CD4-positive, alpha-beta T cell (primary cell): ENCODE measurements at regions of chr9 and their contacts with region 1.

Region 1: GRCh38 chr9:100352727-100353505 is at the start of gene TEX10:
- DNase-seq: peak; percentile 79 to 93 (median 85)
- ATAC-seq: peak; percentile 90
- H3K4me3 ChIP-seq: peak within 1 kb of the TSS; percentile 85
- H3K4me3 Mint-ChIP-seq: peak within 1 kb of the TSS; percentile 89
- H3K27ac ChIP-seq: peak within 1 kb of the TSS; percentile 58 to 60
- H3K27ac Mint-ChIP-seq: peak within 1 kb of the TSS; percentile 60
- H3K4me1 ChIP-seq: peaks cover 21% of the 10 kb centered on the region
- H3K4me1 Mint-ChIP-seq: peaks cover 53% of the 10 kb centered on the region
- H3K27me3 ChIP-seq: no peaks in the 10 kb centered on the region
- H3K27me3 Mint-ChIP-seq: no peaks in the 10 kb centered on the region
- CTCF ChIP-seq: no peak
- total RNA-seq, gene TEX10: 9.3 to 10.1 TPM

Region 2: GRCh38 chr9:99221621-99222415 is 1131.1 kb before region 1 on chr9 and contains the starts of genes ALG2 and SEC61B:
- CTCF ChIA-PET with region 1: no interaction called
- POLR2A ChIA-PET with region 1: interaction called, 4 read pairs
- intact Hi-C with region 1: loop called in 1 of 2 experiments (anchors 5 kb)
- DNase-seq: peak; percentile 87 to 96 (median 90)
- ATAC-seq: peak; percentile 84
- H3K4me3 ChIP-seq: peak within 1 kb of the TSS; percentile 91
- H3K4me3 Mint-ChIP-seq: peak within 1 kb of the TSS; percentile 98
- H3K27ac ChIP-seq: peak within 1 kb of the TSS; percentile 89 to 95
- H3K27ac Mint-ChIP-seq: peak within 1 kb of the TSS; percentile 99
- H3K4me1 ChIP-seq: peaks cover 33% of the 10 kb centered on the region
- H3K4me1 Mint-ChIP-seq: peaks cover 81% of the 10 kb centered on the region
- H3K27me3 ChIP-seq: no peaks in the 10 kb centered on the region
- H3K27me3 Mint-ChIP-seq: no peaks in the 10 kb centered on the region
- CTCF ChIP-seq: no peak
- total RNA-seq, gene ALG2: 18.1 to 19.9 TPM
- total RNA-seq, gene SEC61B: 83.4 to 84.2 TPM

Region 3: GRCh38 chr9:100229561-100229960 is 123.4 kb before region 1 on chr9:
- CTCF ChIA-PET with region 1: no interaction called
- POLR2A ChIA-PET with region 1: no interaction called
- intact Hi-C with region 1: no loop called
- DNase-seq: no peak
- ATAC-seq: no peak
- H3K4me3 ChIP-seq: no peak overlapping the region
- H3K4me3 Mint-ChIP-seq: no peak overlapping the region
- H3K27ac ChIP-seq: no peak overlapping the region
- H3K27ac Mint-ChIP-seq: no peak overlapping the region
- H3K4me1 ChIP-seq: no peaks in the 10 kb centered on the region
- H3K4me1 Mint-ChIP-seq: no peaks in the 10 kb centered on the region
- H3K27me3 ChIP-seq: no peaks in the 10 kb centered on the region
- H3K27me3 Mint-ChIP-seq: no peaks in the 10 kb centered on the region
- CTCF ChIP-seq: no peak

Region 4: GRCh38 chr9:100340224-100340623 is 12.7 kb before region 1 on chr9:
- CTCF ChIA-PET with region 1: interaction called, 4 read pairs
- POLR2A ChIA-PET with region 1: interaction called, 17 read pairs
- intact Hi-C with region 1: no loop called
- DNase-seq: no peak
- ATAC-seq: no peak
- H3K4me3 ChIP-seq: no peak overlapping the region
- H3K4me3 Mint-ChIP-seq: no peak overlapping the region
- H3K27ac ChIP-seq: no peak overlapping the region
- H3K27ac Mint-ChIP-seq: no peak overlapping the region
- H3K4me1 ChIP-seq: no peaks in the 10 kb centered on the region
- H3K4me1 Mint-ChIP-seq: peaks cover 50% of the 10 kb centered on the region
- H3K27me3 ChIP-seq: no peaks in the 10 kb centered on the region
- H3K27me3 Mint-ChIP-seq: no peaks in the 10 kb centered on the region
- CTCF ChIP-seq: no peak

Region 5: DNA sequence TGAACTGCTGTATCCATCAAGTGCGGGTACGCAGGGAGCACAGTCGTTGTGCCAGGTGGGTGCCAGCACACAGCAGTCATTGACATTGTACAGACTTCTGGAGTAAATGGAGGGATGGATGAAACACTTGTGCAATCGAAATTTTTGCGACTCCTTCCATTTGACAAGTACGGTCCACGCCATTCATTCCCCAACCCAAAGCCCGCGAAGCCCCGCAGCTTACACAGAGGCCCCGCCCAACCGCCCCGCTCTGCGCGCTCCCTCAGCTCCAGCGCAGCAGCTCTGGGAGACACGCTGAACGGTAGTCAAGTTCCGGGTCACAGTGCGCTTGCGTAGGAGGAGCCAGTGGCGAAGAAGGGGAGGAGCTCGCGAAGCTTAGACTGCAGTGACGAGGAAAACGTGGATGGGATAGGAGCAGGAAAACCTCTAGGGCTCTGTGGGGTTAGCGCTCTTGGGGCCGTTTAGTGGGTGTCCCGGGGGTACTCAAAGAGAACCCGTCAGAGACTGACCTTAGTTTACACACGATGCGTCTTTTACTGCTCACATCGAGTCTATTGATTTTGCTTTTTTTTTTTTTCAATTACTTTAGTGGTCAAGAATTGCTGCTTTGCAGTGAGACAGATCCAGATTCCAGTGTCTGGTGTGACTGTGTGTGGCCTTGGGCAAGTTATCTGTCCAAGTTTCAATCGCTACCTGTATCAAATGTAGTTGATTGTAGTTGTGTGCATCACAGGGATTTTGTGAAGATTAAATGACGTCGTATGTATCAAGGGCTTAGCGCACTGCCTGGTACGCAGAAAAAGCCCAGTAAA is 58.8 kb after region 1 on chr9:
- CTCF ChIA-PET with region 1: no interaction called
- POLR2A ChIA-PET with region 1: interaction called, 15 read pairs
- intact Hi-C with region 1: loop called in 1 of 2 experiments (anchors 2 kb)
- DNase-seq: peak; percentile 66 to 94 (median 82)
- ATAC-seq: peak; percentile 100
- H3K4me3 ChIP-seq: peak overlapping the region; percentile 68
- H3K4me3 Mint-ChIP-seq: peak overlapping the region; percentile 92
- H3K27ac ChIP-seq: no peak overlapping the region
- H3K27ac Mint-ChIP-seq: peak overlapping the region; percentile 40
- H3K4me1 ChIP-seq: peaks cover 13% of the 10 kb centered on the region
- H3K4me1 Mint-ChIP-seq: peaks cover 16% of the 10 kb centered on the region
- H3K27me3 ChIP-seq: peaks cover 0 to 15% of the 10 kb centered on the region in 2 experiments
- H3K27me3 Mint-ChIP-seq: peaks cover 36% of the 10 kb centered on the region
- CTCF ChIP-seq: no peak

Region 6: GRCh38 chr9:100426530-100427428 is 73.9 kb after region 1 on chr9 and contains the start of gene MSANTD3:
- CTCF ChIA-PET with region 1: no interaction called
- POLR2A ChIA-PET with region 1: interaction called, 7 read pairs
- intact Hi-C with region 1: loop called (anchors 5 kb)
- DNase-seq: peak; percentile 28 to 79 (median 54)
- ATAC-seq: peak; percentile 80
- H3K4me3 ChIP-seq: peak within 1 kb of the TSS; percentile 78
- H3K4me3 Mint-ChIP-seq: peak within 1 kb of the TSS; percentile 98
- H3K27ac ChIP-seq: peak within 1 kb of the TSS in 1 of 2 donors; percentile 0
- H3K27ac Mint-ChIP-seq: peak within 1 kb of the TSS; percentile 96
- H3K4me1 ChIP-seq: peaks cover 20% of the 10 kb centered on the region
- H3K4me1 Mint-ChIP-seq: peaks cover 44% of the 10 kb centered on the region
- H3K27me3 ChIP-seq: peaks cover 0 to 7% of the 10 kb centered on the region in 2 experiments
- H3K27me3 Mint-ChIP-seq: peaks cover 7% of the 10 kb centered on the region
- CTCF ChIP-seq: no peak
- total RNA-seq, gene MSANTD3: 8.8 to 9.6 TPM

Region 7: DNA sequence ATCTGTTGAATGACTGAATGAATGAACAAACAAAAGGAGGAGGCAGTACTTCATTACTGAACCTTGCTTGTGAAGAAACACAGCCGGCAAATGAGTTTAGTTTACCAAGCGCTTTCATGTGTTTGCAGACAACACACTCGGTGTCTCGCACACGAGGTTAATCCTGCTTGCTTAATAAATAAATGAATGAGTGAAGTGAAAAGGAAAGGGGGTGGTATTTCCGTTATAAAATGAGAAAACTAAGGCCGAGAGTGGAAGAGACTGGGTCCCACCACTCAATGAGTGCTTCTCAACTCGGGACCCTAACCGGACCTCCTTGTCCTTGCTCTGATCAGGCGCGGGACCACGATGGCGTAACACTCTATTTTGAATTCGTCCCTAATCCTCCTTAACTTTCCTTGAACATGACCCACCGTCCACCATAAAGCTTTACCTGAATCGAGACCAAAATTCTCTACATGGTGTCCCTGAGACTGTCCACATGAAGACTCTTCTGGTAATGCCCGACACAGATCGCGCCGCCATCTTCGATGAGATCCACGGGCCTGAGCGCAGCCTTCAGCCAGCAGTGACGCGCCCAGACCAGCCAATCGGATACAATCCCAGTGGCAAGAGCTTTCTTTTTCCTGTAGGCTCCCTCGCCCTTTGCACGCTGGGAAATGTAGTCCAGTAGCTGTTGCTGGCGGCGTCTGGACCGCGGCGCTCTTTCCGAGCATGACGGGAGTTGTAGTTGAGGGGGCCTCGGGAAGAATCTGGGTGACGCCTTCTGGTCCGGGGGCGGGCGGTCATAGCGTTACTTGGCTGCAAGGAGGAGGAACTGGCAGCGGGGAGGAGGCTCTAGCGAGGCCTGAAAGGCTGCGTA is 1045.4 kb after region 1 on chr9 and contains the starts of genes MRPL50 and ZNF189:
- CTCF ChIA-PET with region 1: no interaction called
- POLR2A ChIA-PET with region 1: no interaction called
- intact Hi-C with region 1: loop called in 1 of 2 experiments (anchors 5 kb)
- DNase-seq: peak; percentile 90 to 99 (median 94)
- ATAC-seq: peak; percentile 94
- H3K4me3 ChIP-seq: peak within 1 kb of the TSS; percentile 81
- H3K4me3 Mint-ChIP-seq: peak within 1 kb of the TSS; percentile 99
- H3K27ac ChIP-seq: peak within 1 kb of the TSS; percentile 87 to 92
- H3K27ac Mint-ChIP-seq: peak within 1 kb of the TSS; percentile 99
- H3K4me1 ChIP-seq: peaks cover 32% of the 10 kb centered on the region
- H3K4me1 Mint-ChIP-seq: peaks cover 86% of the 10 kb centered on the region
- H3K27me3 ChIP-seq: no peaks in the 10 kb centered on the region
- H3K27me3 Mint-ChIP-seq: no peaks in the 10 kb centered on the region
- CTCF ChIP-seq: no peak
- total RNA-seq, gene MRPL50: 5.9 to 6.1 TPM
- total RNA-seq, gene ZNF189: 5.0 to 5.3 TPM